ENCODE measurements at regions of chr4 and their contacts with region 1.

Region 1: GRCh38 chr4:10013722-10014121 is 7.6 kb downstream of the SLC2A9 start:
- DNase-seq: peak; percentile 86
- ATAC-seq: peak; percentile 79
- H3K4me3 Mint-ChIP-seq: no peak overlapping the region
- H3K27ac Mint-ChIP-seq: no peak overlapping the region
- H3K4me1 Mint-ChIP-seq: peaks cover 6% of the 10 kb centered on the region
- H3K27me3 Mint-ChIP-seq: peaks cover 2% of the 10 kb centered on the region; the same call in 1 of the 2 replicates
- CTCF ChIP-seq: peak; percentile 55

Region 2: DNA sequence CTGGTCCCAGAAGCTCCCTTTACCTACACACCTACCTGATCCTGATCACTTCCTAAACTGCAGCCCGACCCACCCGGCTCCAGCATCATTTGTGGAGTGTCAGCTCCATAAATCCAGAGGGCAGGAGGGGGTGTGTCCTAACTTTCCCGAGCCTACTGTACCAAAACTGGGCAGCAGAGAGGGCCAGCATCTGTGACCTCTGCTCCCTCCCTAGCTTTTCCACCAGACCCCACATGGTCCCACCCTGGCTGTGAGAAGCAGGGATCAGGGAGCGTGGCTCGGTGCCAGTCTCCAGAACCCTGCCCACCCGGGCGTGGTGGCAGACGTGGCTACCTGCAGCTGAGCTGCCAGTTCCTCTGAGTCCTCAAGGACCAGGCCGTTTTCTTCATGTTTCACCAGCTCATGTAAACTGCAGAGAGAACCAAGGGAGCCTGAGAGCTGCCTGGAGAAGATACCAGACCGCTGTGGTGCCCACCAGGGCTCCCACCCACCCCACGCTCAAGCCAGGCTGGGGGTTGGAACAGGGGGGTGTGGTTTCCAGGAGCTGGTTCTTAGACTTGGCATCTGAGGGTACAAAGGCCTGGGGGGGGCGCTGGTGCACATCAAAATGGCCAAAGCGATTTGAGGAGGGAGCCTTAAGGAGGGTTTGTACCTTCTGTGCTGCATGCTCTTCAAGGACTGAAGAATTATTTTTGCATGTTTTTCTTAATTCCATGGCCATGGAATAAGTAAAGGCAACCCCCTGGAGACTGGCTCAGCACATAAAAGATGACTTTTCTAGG is 309.0 kb before region 1 on chr4:
- CTCF ChIA-PET with region 1: interaction called, 106 read pairs
- POLR2A ChIA-PET with region 1: no interaction called
- DNase-seq: peak; percentile 53
- ATAC-seq: 0 out of 2 replicates have a peak, but pooled peaks have one; percentile 30
- H3K4me3 Mint-ChIP-seq: no peak overlapping the region
- H3K27ac Mint-ChIP-seq: no peak overlapping the region
- H3K4me1 Mint-ChIP-seq: peaks cover 7% of the 10 kb centered on the region; the same call in 1 of the 2 replicates
- H3K27me3 Mint-ChIP-seq: no peaks in the 10 kb centered on the region
- CTCF ChIP-seq: no peak

Region 3: DNA sequence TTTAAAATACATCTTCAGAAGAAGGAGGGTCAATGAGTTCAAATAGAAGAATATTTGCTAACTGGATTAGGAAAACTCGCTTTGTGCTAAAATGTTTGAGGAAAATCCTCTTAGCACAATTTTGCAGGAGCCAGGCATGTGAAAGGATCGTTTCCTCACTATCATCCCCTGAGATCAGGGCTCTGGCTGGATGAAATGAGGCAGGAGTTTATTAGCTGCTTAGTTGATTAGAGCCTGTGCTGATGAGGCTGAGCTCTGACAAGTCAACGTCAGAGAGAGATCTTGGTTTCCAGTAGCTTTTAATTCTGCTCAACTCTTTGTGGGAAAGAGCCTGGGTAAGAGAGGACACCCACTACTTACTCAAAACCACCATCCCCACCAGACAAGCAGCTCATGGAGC is 240.3 kb before region 1 on chr4:
- CTCF ChIA-PET with region 1: interaction called, 15 read pairs
- POLR2A ChIA-PET with region 1: no interaction called
- DNase-seq: no peak
- ATAC-seq: no peak
- H3K4me3 Mint-ChIP-seq: no peak overlapping the region
- H3K27ac Mint-ChIP-seq: no peak overlapping the region
- H3K4me1 Mint-ChIP-seq: no peaks in the 10 kb centered on the region
- H3K27me3 Mint-ChIP-seq: peaks cover 5% of the 10 kb centered on the region
- CTCF ChIP-seq: no peak

Region 4: GRCh38 chr4:9919047-9919446 is 94.7 kb before region 1 on chr4:
- CTCF ChIA-PET with region 1: interaction called, 15 read pairs
- POLR2A ChIA-PET with region 1: no interaction called
- DNase-seq: peak; percentile 41
- ATAC-seq: peak; percentile 90
- H3K4me3 Mint-ChIP-seq: no peak overlapping the region
- H3K27ac Mint-ChIP-seq: no peak overlapping the region
- H3K4me1 Mint-ChIP-seq: peaks cover 20% of the 10 kb centered on the region
- H3K27me3 Mint-ChIP-seq: no peaks in the 10 kb centered on the region
- CTCF ChIP-seq: no peak

Region 5: GRCh38 chr4:10023806-10024205 is 10.1 kb after region 1 on chr4:
- CTCF ChIA-PET with region 1: interaction called, 11 read pairs
- POLR2A ChIA-PET with region 1: no interaction called
- DNase-seq: no peak
- ATAC-seq: no peak
- H3K4me3 Mint-ChIP-seq: no peak overlapping the region
- H3K27ac Mint-ChIP-seq: no peak overlapping the region
- H3K4me1 Mint-ChIP-seq: 0 out of 2 replicates have a peak, but pooled peaks cover 4% of the 10 kb centered on the region
- H3K27me3 Mint-ChIP-seq: peaks cover 17% of the 10 kb centered on the region
- CTCF ChIP-seq: no peak

Region 6: DNA sequence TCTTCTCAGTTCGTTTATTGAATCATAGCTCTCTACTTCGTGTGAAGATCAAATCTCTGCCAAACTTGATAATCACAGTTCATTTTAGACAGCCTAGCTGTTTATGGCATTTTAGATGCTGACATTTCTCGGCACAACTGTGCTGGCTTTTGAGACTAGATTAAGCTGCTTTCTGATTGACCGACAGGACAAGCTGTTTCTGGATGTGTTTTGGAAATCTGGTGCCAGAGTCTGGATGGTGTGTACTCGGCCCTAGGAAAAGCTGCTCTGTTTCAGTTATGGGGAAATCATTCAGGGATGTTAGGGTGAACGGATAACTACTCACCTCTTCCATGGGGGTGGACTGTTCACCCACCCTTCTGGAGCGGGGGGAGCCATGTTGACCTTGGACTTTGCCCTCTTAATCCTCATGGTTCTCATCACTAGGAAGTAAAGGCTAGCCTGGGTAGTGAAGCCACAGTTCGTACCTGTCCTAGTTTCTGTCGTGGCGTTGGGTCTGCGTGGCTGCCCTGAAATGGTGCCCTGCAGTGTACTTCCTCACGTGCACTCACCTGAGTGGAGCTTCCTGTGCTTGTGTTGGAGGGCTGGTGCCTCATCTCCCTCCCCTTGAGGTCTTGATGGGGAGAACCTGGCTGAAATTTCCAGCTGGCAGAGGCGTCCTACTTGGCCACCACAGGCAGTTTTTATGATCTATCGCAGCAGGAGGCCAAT is 116.6 kb after region 1 on chr4:
- CTCF ChIA-PET with region 1: no interaction called
- POLR2A ChIA-PET with region 1: no interaction called
- DNase-seq: no peak
- ATAC-seq: no peak
- H3K4me3 Mint-ChIP-seq: no peak overlapping the region
- H3K27ac Mint-ChIP-seq: no peak overlapping the region
- H3K4me1 Mint-ChIP-seq: no peaks in the 10 kb centered on the region
- H3K27me3 Mint-ChIP-seq: peaks cover 4% of the 10 kb centered on the region; the same call in 1 of the 2 replicates
- CTCF ChIP-seq: no peak

Region 7: DNA sequence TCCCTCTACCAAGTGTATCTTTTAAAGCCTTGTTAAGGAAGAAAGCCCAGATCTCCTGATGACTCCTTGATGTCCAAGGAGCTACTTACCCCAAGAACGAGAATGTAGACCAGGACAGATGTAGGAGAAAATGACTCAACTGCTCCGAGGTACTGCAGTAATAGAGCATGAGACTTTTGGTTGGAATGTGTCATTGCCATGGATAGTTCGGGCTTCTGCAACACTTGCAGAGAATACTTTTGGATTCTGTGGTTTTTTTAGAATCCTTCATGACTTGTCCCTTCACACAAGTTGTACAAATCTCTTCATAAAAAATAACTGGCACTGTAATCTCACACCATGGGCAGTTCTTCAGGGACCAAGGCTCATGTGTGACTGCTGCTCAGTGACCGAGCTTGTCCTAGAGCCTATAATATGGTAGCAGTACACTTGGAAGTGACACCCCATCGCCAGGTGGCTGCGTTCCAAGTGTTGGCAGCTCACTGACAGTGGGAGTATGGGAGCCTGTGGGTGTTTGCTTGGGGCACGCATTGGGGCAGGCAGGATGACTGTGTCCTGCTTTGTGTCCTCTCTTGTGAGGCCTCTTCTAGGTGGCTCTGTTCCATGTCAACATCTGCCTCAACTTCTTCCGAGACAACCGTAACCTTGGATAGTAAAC is 190.8 kb after region 1 on chr4:
- CTCF ChIA-PET with region 1: no interaction called
- POLR2A ChIA-PET with region 1: no interaction called
- DNase-seq: no peak
- ATAC-seq: no peak
- H3K4me3 Mint-ChIP-seq: no peak overlapping the region
- H3K27ac Mint-ChIP-seq: no peak overlapping the region
- H3K4me1 Mint-ChIP-seq: no peaks in the 10 kb centered on the region
- H3K27me3 Mint-ChIP-seq: peaks cover 13% of the 10 kb centered on the region
- CTCF ChIP-seq: no peak

Measured in WTC11 (cell line).